ENCODE measurements at regions of chr7 and their contacts with region 1.

Region 1: DNA sequence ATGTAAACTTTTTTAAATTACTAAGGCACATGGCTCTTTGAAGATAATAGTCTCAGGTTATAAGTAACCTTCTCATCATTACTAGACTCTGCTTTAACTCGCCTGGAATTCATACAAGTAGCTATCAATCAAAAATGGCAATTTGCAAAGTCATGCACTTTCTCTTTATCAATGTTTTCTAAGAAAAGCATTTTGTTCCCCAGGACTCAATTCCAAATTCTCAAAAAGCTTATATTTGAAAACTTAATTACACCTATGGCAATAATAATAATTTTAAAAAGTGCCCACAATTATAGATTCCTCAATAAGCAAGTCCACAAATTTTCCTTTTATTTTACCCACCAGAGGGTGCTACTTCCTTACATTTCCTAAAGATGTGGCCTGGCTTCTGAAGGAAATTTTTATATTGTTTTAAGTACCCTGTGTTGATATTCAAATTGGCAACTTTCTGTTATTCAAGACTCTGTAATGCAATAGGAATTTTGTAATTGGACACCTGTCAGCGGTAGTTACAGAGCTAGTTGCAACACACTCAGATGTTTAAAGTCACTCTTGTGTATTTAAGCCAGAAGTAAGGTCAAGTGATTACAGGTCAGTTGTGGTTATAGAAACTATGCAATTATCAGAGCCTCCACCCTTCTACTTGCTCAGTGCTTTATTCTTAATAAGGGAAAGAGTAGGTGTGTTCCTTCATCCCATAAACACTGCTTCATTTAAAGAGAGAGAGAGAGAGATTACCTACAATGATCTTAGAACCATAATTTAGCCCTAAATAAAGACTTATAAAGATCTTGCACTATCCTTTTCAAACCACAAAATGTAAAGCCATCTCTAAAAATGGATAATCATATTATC is 47.1 kb upstream of the HYAL4 start:
- DNase-seq: peak; percentile 26
- H3K4me3 ChIP-seq: no peak overlapping the region
- H3K27ac ChIP-seq: no peak overlapping the region
- H3K4me1 ChIP-seq: no peaks in the 10 kb centered on the region
- H3K27me3 ChIP-seq: no peaks in the 10 kb centered on the region
- CTCF ChIP-seq: peak in 3 of 4 experiments; percentile 64 to 86 (median 83)
- POLR2A ChIP-seq: no peak

Region 2: DNA sequence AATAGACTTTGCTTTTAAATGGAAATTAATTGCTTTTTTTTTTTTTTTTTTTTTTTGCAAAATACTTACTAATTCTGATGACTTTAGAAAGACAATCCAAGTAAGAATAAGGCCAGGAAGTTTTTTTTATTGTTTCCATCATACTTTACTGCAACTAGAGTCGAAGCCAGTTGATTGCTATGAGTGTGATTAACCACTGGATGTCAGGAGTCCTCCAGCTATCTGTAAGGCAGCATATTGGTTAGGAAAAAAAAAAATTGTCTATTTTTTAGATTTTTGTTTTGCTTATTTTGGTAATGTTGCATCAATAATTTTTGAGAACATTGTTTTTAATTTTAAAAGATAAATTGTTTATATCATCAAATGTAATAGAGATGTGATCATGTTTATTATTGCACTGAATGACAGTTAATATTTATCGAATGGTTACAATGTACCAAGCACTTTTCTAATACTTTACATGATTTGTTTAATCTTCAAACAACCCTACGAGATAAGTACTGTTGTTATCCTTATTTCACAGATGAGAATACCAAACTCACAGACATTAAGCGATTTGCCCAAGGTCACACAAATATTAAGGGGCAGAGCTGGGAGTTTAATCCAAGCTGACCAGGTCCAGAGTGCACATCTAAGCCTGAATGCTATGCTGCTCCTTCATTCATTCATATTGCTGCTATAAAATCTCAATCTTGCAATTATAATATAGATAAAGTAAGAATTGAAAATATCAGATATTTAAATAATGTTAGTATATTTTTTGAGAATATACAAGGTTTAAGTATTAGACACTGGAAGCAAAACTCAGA is 162.1 kb before region 1 on chr7:
- intact Hi-C with region 1: loop called (anchors 10 kb)
- DNase-seq: no peak
- H3K4me3 ChIP-seq: no peak overlapping the region
- H3K27ac ChIP-seq: no peak overlapping the region
- H3K4me1 ChIP-seq: peaks cover 3% of the 10 kb centered on the region
- H3K27me3 ChIP-seq: no peaks in the 10 kb centered on the region
- CTCF ChIP-seq: peak in 2 of 4 experiments; percentile 21 to 48
- POLR2A ChIP-seq: no peak

Region 3: GRCh38 chr7:123871998-123872867 is 74.3 kb after region 1 on chr7:
- intact Hi-C with region 1: loop called (anchors 2 kb)
- DNase-seq: peak; percentile 19
- H3K4me3 ChIP-seq: no peak overlapping the region
- H3K27ac ChIP-seq: no peak overlapping the region
- H3K4me1 ChIP-seq: no peaks in the 10 kb centered on the region
- H3K27me3 ChIP-seq: no peaks in the 10 kb centered on the region
- CTCF ChIP-seq: peak in 2 of 4 experiments; percentile 54 to 58
- POLR2A ChIP-seq: no peak

Measured in prostate gland (tissue), 2 donors.